ENCODE measurements at regions of chr1 and their contacts with region 1.

Region 1: DNA sequence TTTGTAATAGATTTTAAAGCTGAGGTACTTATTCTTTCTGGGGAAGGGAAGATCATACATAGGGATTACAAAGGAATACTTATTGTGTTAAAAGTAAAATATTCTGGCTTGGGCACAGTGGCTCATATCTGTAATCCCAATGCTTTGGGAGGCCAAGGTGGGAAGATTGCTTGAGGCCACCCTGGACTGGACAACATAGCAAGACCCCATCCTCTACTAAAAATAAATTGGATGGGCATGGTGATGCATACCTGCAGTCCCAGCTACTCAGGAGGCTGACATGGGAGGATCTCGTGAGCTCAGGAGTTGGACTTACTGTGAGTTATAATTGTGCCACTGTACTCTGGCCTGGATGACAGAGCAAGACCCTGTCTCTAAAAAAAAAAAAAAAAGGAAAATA is 27.6 kb downstream of the GABPB2 start:
- DNase-seq: no peak
- ATAC-seq: no peak

Region 2: GRCh38 chr1:150955280-150955679 is 142.8 kb before region 1 on chr1:
- intact Hi-C with region 1: no loop called
- DNase-seq: no peak
- ATAC-seq: no peak

Region 3: GRCh38 chr1:150970808-150971592 is 127.1 kb before region 1 on chr1:
- intact Hi-C with region 1: no loop called
- DNase-seq: peak; percentile 91
- ATAC-seq: peak; percentile 85

Region 4: DNA sequence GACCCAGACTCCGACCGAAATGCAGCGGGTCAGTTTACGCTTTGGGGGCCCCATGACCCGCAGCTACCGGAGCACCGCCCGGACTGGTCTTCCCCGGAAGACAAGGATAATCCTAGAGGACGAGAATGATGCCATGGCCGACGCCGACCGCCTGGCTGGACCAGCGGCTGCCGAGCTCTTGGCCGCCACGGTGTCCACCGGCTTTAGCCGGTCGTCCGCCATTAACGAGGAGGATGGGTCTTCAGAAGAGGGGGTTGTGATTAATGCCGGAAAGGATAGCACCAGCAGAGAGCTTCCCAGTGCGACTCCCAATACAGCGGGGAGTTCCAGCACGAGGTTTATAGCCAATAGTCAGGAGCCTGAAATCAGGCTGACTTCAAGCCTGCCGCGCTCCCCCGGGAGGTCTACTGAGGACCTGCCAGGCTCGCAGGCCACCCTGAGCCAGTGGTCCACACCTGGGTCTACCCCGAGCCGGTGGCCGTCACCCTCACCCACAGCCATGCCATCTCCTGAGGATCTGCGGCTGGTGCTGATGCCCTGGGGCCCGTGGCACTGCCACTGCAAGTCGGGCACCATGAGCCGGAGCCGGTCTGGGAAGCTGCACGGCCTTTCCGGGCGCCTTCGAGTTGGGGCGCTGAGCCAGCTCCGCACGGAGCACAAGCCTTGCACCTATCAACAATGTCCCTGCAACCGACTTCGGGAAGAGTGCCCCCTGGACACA is 50.0 kb before region 1 on chr1:
- intact Hi-C with region 1: no loop called
- DNase-seq: peak; percentile 81
- ATAC-seq: peak; percentile 79

Region 5: DNA sequence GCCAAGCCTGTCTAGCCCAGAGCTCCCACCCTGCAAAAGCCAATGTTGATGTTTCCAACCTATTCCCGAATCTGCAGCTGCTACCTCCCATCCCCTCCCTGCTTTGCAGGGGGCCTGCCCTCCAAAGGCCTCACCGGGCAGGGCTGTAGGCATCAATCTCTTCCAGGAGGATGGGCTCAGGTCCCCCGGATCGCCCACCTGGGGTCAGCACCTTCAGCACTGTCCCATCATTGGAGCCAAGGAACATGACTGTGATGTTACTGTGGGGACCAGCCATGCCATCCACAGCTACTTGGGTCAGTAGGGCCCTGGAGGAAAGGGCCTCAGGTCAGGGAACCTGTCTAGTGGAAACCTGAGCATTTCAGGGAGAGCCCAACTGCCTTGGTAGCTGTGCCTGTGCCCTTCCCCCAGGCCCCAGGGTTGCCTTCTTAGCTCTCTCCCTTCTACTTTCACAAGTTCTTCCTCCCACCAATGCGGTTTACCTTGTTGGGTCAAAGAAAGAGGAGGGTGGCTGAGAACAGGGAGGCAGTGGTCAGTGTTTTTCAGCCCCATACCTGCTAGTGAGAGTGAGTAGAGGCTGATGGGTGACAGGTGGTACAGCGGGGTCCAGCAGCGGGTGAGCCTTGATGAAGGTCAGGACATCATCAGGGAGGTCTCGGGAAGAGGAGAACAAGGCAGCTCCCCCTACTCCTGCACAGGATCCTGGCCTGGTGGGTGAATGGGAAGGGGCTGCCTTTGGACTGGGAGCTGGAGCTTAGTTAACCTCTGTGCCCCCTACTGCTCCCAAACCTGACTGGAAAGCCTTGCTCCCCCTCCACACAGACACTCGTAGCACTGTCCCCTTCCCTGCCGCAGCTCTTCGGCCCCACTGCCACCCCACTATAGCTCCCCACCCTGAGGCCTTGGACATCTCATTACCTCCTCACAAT is 37.6 kb after region 1 on chr1:
- intact Hi-C with region 1: no loop called
- DNase-seq: no peak
- ATAC-seq: no peak

Region 6: DNA sequence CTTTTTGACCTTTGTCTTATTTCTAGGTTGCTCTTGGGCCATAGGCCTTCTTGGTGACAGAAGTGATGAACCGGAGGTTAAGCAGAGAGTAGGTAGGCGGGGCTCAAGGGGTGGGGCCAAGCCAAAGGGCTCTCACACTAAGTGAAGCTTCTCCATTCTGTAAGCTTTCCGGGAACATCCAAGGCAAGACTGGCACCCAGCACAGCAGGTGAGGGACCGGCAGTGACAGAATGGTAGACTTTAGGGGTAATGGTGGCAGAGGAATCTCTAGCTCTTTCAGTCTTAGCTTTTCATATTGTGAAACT is 58.3 kb after region 1 on chr1 and contains the start of gene TNFAIP8L2:
- intact Hi-C with region 1: loop called (anchors 2 kb)
- DNase-seq: peak; percentile 85
- ATAC-seq: peak; percentile 70
- total RNA-seq, gene TNFAIP8L2: 2.6 TPM

Region 7: DNA sequence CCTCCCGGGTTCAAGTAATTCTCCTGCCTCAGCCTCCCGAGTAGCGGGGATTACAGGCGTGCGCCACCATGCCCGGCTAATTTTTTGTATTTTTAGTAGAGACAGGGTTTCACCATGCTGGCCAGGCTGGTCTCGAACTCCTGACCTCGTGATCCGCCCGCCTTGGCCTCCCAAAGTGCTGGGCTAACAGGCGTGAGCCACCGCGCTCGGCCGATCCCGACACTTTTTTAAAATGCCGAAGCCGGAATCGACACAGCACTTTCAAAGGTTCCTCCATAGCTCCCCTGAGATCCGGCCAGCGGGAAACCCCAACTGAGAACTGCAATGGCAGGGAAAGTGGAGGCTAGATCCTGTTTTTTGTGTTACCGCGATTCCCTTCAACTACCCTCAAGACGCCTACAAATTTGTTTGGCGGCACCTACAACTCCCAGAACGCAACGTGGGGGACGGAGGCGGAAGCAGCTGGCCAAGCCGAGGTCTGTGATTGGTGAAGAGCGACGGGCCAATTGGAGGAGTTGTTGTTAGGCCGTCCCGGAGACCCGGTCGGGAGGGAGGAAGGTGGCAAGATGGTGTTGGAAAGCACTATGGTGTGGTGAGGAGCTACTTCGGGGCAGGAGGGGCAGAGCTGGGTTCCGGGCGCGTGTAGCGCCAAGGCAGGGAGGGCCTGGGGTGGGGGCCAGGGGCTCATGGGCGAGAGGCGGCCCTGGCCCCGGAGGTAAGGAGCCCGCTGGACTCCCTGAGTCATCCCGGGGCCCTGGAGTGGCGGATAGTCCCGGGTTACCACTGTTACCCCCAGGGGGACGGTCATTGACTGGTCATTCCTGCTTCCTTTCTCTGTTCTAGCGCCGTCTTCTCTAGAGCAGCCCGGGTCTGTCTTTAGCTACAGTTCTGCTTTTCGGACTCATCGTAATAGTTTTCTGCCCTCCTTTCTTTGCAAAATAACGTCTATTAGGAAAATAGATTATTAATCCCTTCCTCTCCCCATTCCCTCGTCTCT is 156.4 kb after region 1 on chr1 and contains the start of gene PSMD4:
- intact Hi-C with region 1: loop called (anchors 10 kb)
- DNase-seq: peak; percentile 95
- ATAC-seq: peak; percentile 99
- total RNA-seq, gene PSMD4: 164 TPM